Left ventricle myocardium inferior (tissue), 1 donor: ENCODE measurements at regions of chr4 and their contacts with region 1.

Region 1: GRCh38 chr4:78863254-78863869 is 75.9 kb downstream of the PAQR3 start:
- DNase-seq: no peak
- H3K4me3 ChIP-seq: no peak overlapping the region
- H3K27ac ChIP-seq: no peak overlapping the region
- H3K4me1 ChIP-seq: peaks cover 5% of the 10 kb centered on the region
- H3K27me3 ChIP-seq: no peaks in the 10 kb centered on the region
- CTCF ChIP-seq: no peak

Region 2: DNA sequence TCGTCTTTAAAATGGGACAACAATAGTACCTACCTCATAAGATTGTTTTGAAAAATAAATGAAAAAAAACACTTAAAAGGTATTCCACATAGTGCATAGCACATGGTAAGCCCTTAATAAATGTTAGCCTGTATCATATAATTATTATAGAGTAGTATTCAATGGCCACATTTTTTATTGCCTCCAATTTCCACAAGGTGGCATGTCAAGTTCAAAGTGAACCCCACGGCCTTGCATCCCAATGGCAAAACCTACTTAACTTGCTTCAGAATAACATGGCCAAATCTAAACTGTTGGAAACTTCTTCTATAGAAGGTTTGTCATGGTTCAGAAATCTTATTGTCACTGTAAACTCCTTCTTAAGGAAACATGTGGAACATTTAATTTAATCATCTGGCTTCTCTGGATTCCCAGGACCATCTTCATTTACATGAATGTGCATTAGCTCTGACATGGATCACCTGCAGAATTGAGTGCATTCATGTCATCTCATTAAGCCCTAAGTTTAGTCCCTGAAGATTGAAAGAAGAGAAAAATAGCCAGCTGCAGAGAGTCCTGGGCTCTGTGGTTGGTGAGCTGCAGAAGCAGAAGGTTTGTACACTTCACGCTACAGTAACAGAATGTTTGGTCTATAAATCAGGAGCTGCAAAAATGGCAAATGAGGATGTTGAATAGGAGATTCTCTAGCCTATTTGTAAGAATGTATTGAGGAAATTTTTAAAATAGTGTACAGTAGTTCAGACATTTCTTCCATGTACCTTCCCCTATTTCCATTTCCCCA is 250.8 kb before region 1 on chr4:
- intact Hi-C with region 1: loop called (anchors 2 kb)
- DNase-seq: no peak
- H3K4me3 ChIP-seq: no peak overlapping the region
- H3K27ac ChIP-seq: peak overlapping the region; percentile 40
- H3K4me1 ChIP-seq: peaks cover 39% of the 10 kb centered on the region
- H3K27me3 ChIP-seq: no peaks in the 10 kb centered on the region
- CTCF ChIP-seq: peak; percentile 79

Region 3: DNA sequence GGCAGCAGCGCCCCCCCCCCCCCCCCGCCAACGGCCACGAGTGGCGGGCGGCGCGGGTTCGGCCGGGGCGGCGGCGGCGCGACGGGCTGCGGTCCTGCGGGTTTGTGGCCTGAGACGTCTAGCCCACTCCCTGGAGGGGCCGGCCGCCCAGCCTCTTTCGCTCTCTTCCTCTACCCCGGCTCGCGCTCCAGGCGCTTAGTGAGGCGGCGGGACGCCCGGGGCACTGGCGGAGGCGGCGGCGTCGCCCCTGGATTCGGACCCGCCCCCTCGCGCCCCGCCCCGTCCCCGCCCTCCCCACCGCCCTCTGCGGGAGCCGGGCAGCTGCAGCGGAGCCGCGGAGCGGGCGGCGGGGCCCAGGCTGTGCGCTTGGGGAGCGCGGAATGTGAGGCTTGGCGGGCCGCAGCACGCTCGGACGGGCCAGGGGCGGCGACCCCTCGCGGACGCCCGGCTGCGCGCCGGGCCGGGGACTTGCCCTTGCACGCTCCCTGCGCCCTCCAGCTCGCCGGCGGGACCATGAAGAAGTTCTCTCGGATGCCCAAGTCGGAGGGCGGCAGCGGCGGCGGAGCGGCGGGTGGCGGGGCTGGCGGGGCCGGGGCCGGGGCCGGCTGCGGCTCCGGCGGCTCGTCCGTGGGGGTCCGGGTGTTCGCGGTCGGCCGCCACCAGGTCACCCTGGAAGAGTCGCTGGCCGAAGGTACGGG is 87.2 kb before region 1 on chr4 and contains the start of gene BMP2K:
- intact Hi-C with region 1: no loop called
- DNase-seq: peak; percentile 86
- H3K4me3 ChIP-seq: peak within 1 kb of the TSS; percentile 90
- H3K27ac ChIP-seq: peak within 1 kb of the TSS; percentile 99
- H3K4me1 ChIP-seq: peaks cover 59% of the 10 kb centered on the region
- H3K27me3 ChIP-seq: no peaks in the 10 kb centered on the region
- CTCF ChIP-seq: peak; percentile 41
- total RNA-seq, gene BMP2K: 16.2 TPM